ENCODE measurements at regions of chr17 and their contacts with region 1.

Region 1: DNA sequence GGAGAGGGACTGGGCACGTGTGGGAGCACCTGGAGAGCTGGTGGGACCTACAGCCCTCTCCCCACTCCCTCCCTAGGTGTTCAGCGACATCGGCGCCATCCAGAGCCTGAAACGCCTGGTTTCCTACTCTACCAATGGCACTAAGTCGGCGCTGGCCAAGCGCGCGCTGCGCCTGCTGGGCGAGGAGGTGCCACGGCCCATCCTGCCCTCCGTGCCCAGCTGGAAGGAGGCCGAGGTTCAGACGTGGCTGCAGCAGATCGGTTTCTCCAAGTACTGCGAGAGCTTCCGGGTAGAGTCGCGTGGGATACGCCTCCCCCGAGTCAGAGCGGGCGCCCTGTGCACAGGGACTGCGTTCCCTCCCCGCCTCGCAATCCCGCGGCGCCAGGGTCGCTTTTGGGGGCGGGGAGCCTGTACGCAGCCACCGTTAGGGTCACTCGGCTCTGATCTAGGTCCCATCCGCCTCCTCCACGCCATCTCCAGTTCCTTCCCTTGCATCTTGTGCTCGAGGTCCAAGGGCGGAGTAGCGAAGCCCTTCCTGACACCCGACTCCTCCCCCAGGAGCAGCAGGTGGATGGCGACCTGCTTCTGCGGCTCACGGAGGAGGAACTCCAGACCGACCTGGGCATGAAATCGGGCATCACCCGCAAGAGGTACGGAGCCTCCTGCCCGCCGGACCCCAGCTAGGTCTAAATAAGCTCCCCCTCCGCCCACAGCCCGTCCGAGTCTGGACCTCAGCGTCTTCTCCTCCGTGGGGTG is 13.0 kb downstream of the SARM1 start:
- H3K4me3 Mint-ChIP-seq: peak overlapping the region; percentile 84
- H3K27ac Mint-ChIP-seq: peak overlapping the region; percentile 79
- H3K4me1 Mint-ChIP-seq: peaks cover 44% of the 10 kb centered on the region
- H3K27me3 Mint-ChIP-seq: peaks cover 54% of the 10 kb centered on the region

Region 2: DNA sequence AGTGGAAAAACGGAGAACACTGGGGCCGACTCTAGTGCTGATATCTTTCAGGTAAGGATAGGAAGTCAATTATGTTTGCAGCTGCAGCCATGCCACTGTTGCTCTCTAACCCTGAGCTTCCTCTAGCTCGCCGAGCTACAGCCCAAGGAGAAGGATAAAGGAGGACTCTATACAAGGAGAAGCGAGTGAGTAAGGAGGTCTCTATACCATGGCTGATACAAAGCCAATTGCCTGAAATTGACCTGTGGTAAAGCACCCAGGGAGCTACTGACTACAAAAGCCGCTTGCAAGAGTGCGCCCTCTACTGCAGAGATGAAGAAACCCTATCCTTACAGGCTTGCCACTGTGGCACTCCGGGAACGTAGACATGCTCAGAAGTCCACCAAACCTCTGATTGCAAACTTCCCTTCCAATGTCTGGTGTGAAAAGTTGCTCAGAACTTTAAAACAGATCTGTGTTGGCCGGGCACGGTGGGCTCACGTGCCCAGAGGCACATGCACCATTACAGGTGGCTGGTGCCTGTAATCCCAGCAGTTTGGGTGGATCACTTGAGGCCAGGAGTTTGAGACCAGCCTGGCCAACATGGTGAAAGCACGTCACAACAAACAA is 32.3 kb after region 1 on chr17:
- intact Hi-C with region 1: loop called (anchors 5 kb)
- H3K4me3 Mint-ChIP-seq: no peak overlapping the region
- H3K27ac Mint-ChIP-seq: no peak overlapping the region
- H3K4me1 Mint-ChIP-seq: peaks cover 8% of the 10 kb centered on the region
- H3K27me3 Mint-ChIP-seq: peaks cover 14% of the 10 kb centered on the region

Region 3: GRCh38 chr17:28433721-28434120 is 49.3 kb after region 1 on chr17:
- intact Hi-C with region 1: no loop called
- H3K4me3 Mint-ChIP-seq: no peak overlapping the region
- H3K27ac Mint-ChIP-seq: no peak overlapping the region
- H3K4me1 Mint-ChIP-seq: peaks cover 11% of the 10 kb centered on the region
- H3K27me3 Mint-ChIP-seq: peaks cover 9% of the 10 kb centered on the region

Region 4: GRCh38 chr17:28552246-28552999 is 168.0 kb after region 1 on chr17 and contains the start of gene UNC119:
- intact Hi-C with region 1: loop called (anchors 10 kb)
- H3K4me3 Mint-ChIP-seq: peak within 1 kb of the TSS; percentile 90
- H3K27ac Mint-ChIP-seq: peak within 1 kb of the TSS; percentile 81
- H3K4me1 Mint-ChIP-seq: peaks cover 53% of the 10 kb centered on the region
- H3K27me3 Mint-ChIP-seq: no peaks in the 10 kb centered on the region

Measured in dendritic cell treated with granulocyte-macrophage colony-stimulating factor and Interleukin-4, amounts not matched to agents 40 ng/mL and 50 ng/mL, for 4 days (primary cell).